Naive thymus-derived CD4-positive, alpha-beta T cell (primary cell): ENCODE measurements at regions of chr7 and their contacts with region 1.

Region 1: DNA sequence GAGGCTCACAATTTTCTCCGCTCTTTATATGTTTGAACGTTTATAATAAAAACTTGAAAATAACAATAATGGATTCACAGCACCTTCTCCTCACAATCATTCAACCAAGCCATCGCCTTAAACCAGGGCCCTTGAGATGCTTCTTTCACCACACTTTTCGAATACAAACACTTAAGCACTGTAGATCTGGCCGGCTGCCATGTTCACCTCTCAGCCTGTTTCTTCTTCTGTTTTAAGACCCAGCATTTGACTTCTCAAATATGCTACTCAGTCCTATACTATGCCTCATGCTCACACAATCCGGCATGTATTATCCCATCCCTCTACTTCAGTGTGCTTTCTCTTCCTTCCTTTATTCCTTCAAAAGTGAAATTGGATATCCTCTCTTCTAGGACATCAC is 280.6 kb downstream of the TFEC start:
- DNase-seq: no peak
- ATAC-seq: no peak
- H3K4me3 ChIP-seq: no peak overlapping the region
- H3K4me3 Mint-ChIP-seq: no peak overlapping the region
- H3K27ac ChIP-seq: no peak overlapping the region
- H3K27ac Mint-ChIP-seq: no peak overlapping the region
- H3K4me1 ChIP-seq: peaks cover 0 to 4% of the 10 kb centered on the region in 2 donors
- H3K4me1 Mint-ChIP-seq: no peaks in the 10 kb centered on the region
- H3K27me3 ChIP-seq: no peaks in the 10 kb centered on the region
- H3K27me3 Mint-ChIP-seq: peaks cover 0 to 4% (median 0%) of the 10 kb centered on the region in 5 donors

Region 2: GRCh38 chr7:115812794-115813193 is 62.9 kb after region 1 on chr7:
- CTCF ChIA-PET with region 1: no interaction called
- POLR2A ChIA-PET with region 1: no interaction called
- intact Hi-C with region 1: loop called in 1 of 2 experiments (anchors 10 kb)
- DNase-seq: no peak
- ATAC-seq: no peak
- H3K4me3 ChIP-seq: no peak overlapping the region
- H3K4me3 Mint-ChIP-seq: no peak overlapping the region
- H3K27ac ChIP-seq: no peak overlapping the region
- H3K27ac Mint-ChIP-seq: no peak overlapping the region
- H3K4me1 ChIP-seq: no peaks in the 10 kb centered on the region
- H3K4me1 Mint-ChIP-seq: no peaks in the 10 kb centered on the region
- H3K27me3 ChIP-seq: no peaks in the 10 kb centered on the region
- H3K27me3 Mint-ChIP-seq: peaks cover 0 to 5% (median 0%) of the 10 kb centered on the region in 5 donors